ENCODE measurements at regions of chr9 and their contacts with region 1.

Region 1: DNA sequence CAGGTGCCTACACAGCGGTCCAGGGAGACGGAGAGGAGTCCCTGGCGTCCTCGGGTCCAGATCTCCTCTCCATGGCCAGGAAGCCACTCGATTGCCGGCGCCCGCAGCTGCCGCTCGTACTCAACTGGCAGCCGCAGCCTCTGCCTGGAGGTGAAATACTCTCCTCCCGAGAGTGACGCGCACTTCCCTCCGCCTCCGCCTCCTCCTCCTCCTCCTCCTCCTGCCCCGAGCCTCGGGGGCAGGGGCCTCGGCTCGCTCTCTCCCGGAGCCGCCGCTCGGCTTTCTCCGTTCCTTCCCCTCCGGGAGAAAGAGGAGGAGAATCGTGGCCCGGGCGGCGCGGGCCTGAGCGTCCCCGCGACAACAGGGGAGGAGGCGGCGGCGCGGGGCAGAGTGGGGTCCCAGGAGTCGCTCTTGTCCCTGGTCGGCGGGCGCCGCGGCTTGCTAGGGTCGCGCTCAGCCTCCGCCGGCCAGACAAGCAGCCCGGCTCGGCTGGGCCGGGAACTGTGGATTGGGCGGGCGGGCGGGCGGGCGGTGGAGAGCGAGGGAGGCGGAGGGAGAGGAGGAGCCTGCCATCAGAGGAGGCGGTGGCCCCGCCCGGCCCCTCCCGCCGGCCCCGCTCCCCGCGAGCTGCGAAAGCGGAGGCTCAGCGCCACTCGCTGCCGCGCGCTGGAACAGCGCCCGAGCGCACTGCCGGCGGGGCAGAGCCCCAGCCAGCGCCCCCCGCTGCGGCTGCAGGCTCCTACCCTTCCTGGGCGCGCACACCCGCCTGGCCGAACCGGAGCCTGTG is at the start of gene CEMIP2:
- DNase-seq: peak; percentile 88
- H3K4me3 ChIP-seq: peak within 1 kb of the TSS; percentile 74
- H3K27ac ChIP-seq: no peak within 1 kb of the TSS
- H3K4me1 ChIP-seq: peaks cover 10% of the 10 kb centered on the region
- CTCF ChIP-seq: no peak; the same call in 1 of the 2 replicates
- total RNA-seq, gene CEMIP2: 0.90 and 1.8 TPM in 2 replicates

Region 2: GRCh38 chr9:71285191-71285656 is 483.4 kb before region 1 on chr9:
- CTCF ChIA-PET with region 1: no interaction called
- POLR2A ChIA-PET with region 1: no interaction called
- intact Hi-C with region 1: loop called (anchors 5 kb)
- DNase-seq: peak; percentile 63
- H3K4me3 ChIP-seq: no peak overlapping the region
- H3K27ac ChIP-seq: no peak overlapping the region
- H3K4me1 ChIP-seq: no peaks in the 10 kb centered on the region
- CTCF ChIP-seq: peak; percentile 91

Region 3: DNA sequence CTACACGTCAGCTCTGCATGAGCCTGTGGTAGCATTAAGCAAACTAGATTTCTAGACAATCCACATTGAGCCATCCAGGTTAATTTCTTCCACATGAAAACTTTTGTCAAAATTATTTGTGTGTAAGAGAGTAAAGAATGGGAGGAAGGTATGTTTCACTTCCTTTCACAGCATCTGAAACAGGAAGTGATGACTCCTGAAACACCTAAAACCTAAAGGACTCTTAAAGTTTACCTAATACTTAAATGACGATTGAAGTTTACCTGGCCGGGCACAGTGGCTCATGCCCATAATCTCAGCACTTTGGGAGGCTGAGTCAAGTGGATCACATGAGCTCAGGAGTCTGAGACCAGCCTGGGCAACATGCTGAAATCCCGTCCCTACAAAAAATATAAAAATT is 224.1 kb before region 1 on chr9:
- CTCF ChIA-PET with region 1: no interaction called
- POLR2A ChIA-PET with region 1: no interaction called
- intact Hi-C with region 1: loop called (anchors 5 kb)
- DNase-seq: no peak
- H3K4me3 ChIP-seq: no peak overlapping the region
- H3K27ac ChIP-seq: no peak overlapping the region
- H3K4me1 ChIP-seq: no peaks in the 10 kb centered on the region
- CTCF ChIP-seq: no peak

Region 4: GRCh38 chr9:71683598-71684235 is 84.9 kb before region 1 on chr9:
- CTCF ChIA-PET with region 1: no interaction called
- POLR2A ChIA-PET with region 1: no interaction called
- intact Hi-C with region 1: loop called (anchors 5 kb)
- DNase-seq: no peak
- H3K4me3 ChIP-seq: no peak overlapping the region
- H3K27ac ChIP-seq: no peak overlapping the region
- H3K4me1 ChIP-seq: no peaks in the 10 kb centered on the region
- CTCF ChIP-seq: no peak

Region 5: DNA sequence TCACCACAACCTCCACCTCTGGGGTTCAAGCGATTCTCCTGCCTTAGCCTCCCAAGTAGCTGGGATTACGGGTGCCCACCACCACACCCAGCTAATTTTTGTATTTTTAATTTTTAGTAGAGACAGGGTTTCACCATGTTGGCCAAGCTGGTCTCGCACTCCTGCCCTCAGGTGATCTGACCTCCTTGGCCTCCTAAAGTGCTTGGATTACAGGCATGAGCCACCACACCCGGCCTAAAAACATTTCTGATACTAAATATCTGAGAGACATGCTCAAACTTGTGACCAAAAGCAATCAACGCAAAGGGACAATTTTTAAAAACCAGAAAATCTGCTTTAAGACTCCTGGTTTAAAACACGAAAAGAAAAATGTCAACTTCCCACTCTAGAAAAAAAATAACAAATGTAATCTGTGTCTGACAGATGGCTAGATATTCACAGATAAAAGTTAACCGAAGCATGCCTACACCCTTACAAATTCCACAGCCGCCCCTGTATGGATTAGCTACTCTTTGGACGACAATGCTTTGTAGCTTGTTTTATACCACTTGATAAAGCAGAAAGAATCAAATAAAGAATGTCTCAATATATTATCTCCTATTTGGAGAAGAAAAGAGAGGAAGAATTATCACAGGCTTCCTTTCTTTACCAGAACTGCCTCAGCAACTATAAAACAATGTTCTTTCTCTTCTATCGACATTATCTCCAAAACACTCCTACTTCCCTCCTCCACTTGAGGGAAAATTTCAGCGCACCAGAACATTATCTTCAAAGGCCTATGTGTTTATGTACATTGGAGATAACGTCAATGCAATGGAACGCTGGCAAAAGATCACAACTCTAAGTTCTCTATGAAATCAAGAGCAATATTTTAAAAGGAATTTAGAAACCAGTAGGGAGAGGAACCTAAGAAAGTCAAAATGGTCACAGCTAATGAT is 26.6 kb before region 1 on chr9:
- CTCF ChIA-PET with region 1: no interaction called
- POLR2A ChIA-PET with region 1: no interaction called
- intact Hi-C with region 1: no loop called
- DNase-seq: no peak
- H3K4me3 ChIP-seq: no peak overlapping the region
- H3K27ac ChIP-seq: no peak overlapping the region
- H3K4me1 ChIP-seq: no peaks in the 10 kb centered on the region
- CTCF ChIP-seq: no peak

Region 6: DNA sequence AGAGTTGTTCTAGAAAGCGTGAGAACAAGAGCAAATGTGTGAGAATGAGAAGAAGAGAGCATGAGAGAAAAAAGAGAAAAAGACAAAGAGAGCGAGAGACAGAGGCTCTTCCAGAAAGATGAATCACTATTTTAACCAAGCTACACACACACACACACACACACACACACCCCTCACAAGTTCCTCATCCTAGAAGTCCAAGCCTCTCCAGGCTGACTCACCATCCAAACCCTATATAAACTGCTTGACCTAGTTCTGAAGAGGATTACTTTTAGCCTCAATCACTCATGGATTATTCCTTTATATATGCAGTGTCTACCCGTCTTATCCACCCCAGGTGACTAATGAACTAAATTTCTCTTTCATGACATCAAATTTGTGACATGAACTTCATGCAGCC is 254.3 kb after region 1 on chr9:
- CTCF ChIA-PET with region 1: interaction called, 3 read pairs
- POLR2A ChIA-PET with region 1: no interaction called
- intact Hi-C with region 1: loop called (anchors 5 kb)
- DNase-seq: no peak
- H3K4me3 ChIP-seq: no peak overlapping the region
- H3K27ac ChIP-seq: no peak overlapping the region
- H3K4me1 ChIP-seq: no peaks in the 10 kb centered on the region
- CTCF ChIP-seq: no peak